Activated B cell treated with CpG ODN at 0.5 μM for 24 hours (primary cell): ENCODE measurements at regions of chr17 and their contacts with region 1.

Region 1: GRCh38 chr17:7435221-7435675 is at the start of gene TMEM102:
- DNase-seq: peak; percentile 95
- ATAC-seq: peak; percentile 87
- H3K4me3 Mint-ChIP-seq: peak within 1 kb of the TSS; percentile 94
- H3K27ac Mint-ChIP-seq: peak within 1 kb of the TSS; percentile 93
- H3K4me1 Mint-ChIP-seq: peaks cover 45% of the 10 kb centered on the region
- H3K27me3 Mint-ChIP-seq: peaks cover 15% of the 10 kb centered on the region
- CTCF ChIP-seq: no peak
- total RNA-seq, gene TMEM102: 13.4 and 14.8 TPM in 2 replicates

Region 2: GRCh38 chr17:7045909-7046724 is 389.1 kb before region 1 on chr17:
- CTCF ChIA-PET with region 1: interaction called, 5 read pairs
- POLR2A ChIA-PET with region 1: interaction called, 9 read pairs
- intact Hi-C with region 1: loop called (anchors 5 kb)
- DNase-seq: peak; percentile 30
- ATAC-seq: peak; percentile 11
- H3K4me3 Mint-ChIP-seq: peak overlapping the region; percentile 81
- H3K27ac Mint-ChIP-seq: peak overlapping the region; percentile 86
- H3K4me1 Mint-ChIP-seq: peaks cover 45% of the 10 kb centered on the region
- H3K27me3 Mint-ChIP-seq: no peaks in the 10 kb centered on the region
- CTCF ChIP-seq: no peak

Region 3: GRCh38 chr17:7064261-7064660 is 371.0 kb before region 1 on chr17:
- CTCF ChIA-PET with region 1: no interaction called
- POLR2A ChIA-PET with region 1: no interaction called
- intact Hi-C with region 1: no loop called
- DNase-seq: no peak
- ATAC-seq: no peak
- H3K4me3 Mint-ChIP-seq: no peak overlapping the region
- H3K27ac Mint-ChIP-seq: no peak overlapping the region
- H3K4me1 Mint-ChIP-seq: peaks cover 2% of the 10 kb centered on the region
- H3K27me3 Mint-ChIP-seq: peaks cover 31% of the 10 kb centered on the region
- CTCF ChIP-seq: no peak

Region 4: DNA sequence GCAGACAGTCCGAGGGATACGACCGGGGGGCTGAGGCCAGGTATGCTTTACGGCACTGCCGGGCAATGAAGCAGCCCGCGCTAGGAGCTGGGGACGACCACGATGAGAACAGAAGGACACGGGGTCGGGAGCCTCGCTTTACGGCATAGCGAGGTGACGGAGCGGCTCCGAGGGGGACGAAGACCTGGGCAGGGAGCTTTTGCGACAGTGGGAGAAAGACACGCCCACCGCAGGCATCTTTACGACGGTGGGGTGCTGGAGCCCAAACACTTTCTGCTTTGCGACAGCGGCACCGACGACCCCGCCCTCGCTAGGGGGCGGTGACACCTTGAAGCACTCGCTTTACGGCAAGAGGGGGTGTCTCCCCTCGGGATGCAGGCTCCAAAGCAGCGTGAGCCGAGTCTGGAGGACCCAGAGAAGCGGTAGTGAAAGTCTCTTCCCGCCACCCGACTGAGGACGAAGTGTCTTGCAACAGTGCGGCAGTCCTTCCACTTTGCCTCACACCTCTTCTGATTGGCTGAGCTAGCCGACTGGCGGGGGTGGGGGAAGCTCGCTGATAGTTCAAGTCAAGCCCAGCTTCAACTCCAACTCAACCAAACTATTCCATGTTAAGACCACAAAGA is 105.8 kb before region 1 on chr17:
- CTCF ChIA-PET with region 1: interaction called, 3 read pairs
- POLR2A ChIA-PET with region 1: interaction called, 9 read pairs
- intact Hi-C with region 1: loop called (anchors 1 kb)
- DNase-seq: peak; percentile 92
- ATAC-seq: peak; percentile 74
- H3K4me3 Mint-ChIP-seq: peak overlapping the region; percentile 95
- H3K27ac Mint-ChIP-seq: peak overlapping the region; percentile 96
- H3K4me1 Mint-ChIP-seq: peaks cover 41% of the 10 kb centered on the region
- H3K27me3 Mint-ChIP-seq: no peaks in the 10 kb centered on the region
- CTCF ChIP-seq: no peak

Region 5: DNA sequence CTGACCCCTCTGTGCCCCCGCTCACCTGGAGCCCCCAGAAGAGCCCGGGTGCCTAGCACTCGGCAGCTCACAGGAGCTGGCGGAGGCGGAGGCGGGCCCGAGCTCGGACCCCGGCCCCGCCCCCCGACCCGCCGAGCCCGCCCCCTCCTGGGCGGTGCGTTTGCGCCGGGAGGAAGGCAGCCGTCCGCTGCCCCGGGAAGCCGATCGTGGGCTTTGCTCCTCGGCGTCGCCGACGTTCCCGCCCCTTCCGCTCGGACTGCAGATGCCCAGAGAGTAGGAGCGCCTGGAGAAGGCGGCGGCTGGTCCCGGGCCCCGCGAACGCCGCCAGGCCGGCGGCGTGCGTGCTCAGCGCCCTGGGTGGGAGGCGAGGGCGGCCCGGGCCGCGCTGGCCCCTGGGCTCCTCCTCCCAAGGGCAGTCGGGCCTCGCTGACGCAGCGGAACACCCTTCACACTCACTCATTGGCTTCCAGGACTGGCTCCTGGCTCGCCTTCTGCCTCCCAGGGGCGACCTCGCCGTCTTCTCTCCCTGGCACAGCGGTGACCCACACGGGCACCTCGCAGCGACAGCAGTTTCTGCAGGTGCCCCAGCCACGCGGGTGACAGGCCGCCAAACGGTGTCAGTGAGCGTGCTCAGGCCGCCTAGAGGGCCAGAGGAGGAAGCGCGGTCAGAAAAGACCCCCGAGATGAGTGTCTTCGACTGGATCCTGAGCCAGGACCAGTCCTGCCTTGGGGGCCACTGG is 40.6 kb before region 1 on chr17 and contains the start of gene PLSCR3:
- CTCF ChIA-PET with region 1: interaction called, 3 read pairs
- POLR2A ChIA-PET with region 1: interaction called, 6 read pairs
- intact Hi-C with region 1: loop called (anchors 2 kb)
- DNase-seq: peak; percentile 94
- ATAC-seq: peak; percentile 88
- H3K4me3 Mint-ChIP-seq: peak within 1 kb of the TSS; percentile 91
- H3K27ac Mint-ChIP-seq: peak within 1 kb of the TSS; percentile 85
- H3K4me1 Mint-ChIP-seq: peaks cover 15% of the 10 kb centered on the region
- H3K27me3 Mint-ChIP-seq: no peaks in the 10 kb centered on the region
- CTCF ChIP-seq: no peak
- total RNA-seq, gene PLSCR3: 31.7 and 35.2 TPM in 2 replicates

Region 6: DNA sequence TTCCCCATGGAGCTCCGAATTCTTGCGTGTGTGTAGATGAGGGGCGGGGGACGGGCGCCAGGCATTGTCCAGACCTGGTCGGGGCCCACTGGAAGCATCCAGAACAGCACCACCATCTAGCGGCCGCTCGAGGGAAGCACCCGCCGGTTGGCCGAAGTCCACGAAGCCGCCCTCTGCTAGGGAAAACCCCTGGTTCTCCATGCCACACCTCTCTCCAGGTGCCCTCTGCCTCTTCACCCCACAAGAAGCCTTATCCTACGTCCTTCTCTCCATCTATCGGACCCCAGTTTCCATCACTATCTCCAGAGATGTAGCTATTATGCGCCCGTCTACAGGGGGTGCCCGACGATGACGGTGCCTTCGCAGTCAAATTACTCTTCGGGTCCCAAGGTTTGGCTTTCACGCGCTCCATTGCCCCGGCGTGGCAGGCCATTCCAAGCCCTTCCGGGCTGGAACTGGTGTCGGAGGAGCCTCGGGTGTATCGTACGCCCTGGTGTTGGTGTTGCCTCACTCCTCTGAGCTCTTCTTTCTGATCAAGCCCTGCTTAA is 125.9 kb after region 1 on chr17:
- CTCF ChIA-PET with region 1: interaction called, 25 read pairs
- POLR2A ChIA-PET with region 1: interaction called, 18 read pairs
- intact Hi-C with region 1: loop called (anchors 1 kb)
- DNase-seq: peak; percentile 76
- ATAC-seq: peak; percentile 68
- H3K4me3 Mint-ChIP-seq: peak overlapping the region; percentile 92
- H3K27ac Mint-ChIP-seq: peak overlapping the region; percentile 96
- H3K4me1 Mint-ChIP-seq: peaks cover 60% of the 10 kb centered on the region
- H3K27me3 Mint-ChIP-seq: no peaks in the 10 kb centered on the region
- CTCF ChIP-seq: no peak

Region 7: DNA sequence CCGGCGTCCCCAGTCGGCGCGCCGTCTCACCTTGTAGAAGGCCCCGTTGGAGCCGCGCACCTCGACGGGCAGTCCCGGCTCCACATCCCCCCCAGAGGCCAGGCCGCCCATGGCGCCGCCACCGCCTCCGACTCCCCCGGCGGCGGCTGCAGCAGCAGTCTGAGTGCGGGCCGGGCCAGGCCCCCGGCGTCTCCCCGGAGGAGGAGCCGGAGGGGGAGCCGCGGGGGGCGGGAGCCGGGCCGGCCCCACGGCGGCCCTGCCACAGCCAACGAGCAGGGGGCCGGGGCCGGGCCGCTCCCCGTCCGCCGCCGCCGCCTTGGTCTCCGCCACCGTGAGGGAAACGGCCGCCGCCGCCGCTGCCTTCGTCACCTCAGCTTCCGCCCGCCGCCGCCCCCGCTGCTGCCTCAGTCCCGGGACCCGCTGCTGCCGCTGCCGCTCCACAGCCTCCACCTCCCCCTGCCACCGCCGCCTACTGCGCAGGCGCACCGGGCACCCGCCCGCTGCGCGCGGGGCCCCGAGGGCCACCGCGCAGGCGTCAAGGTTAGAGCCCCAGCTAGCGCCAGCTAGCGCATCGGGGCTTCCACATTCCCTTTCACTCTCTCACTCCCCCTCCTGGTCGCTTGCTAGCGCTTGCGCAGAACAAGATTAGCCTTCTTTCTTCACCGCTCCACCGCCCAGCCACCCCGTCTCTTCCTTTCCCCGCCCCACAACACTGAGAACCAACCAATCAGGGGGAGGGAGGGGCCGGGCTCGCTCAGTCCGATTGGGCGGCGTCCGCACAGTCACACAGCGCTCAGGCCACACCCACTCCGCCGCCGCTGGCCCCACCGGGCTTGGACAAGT is 179.4 kb after region 1 on chr17 and contains the start of gene FXR2:
- CTCF ChIA-PET with region 1: interaction called, 3 read pairs
- POLR2A ChIA-PET with region 1: no interaction called
- intact Hi-C with region 1: loop called (anchors 1 kb)
- DNase-seq: peak; percentile 97
- ATAC-seq: peak; percentile 93
- H3K4me3 Mint-ChIP-seq: peak within 1 kb of the TSS; percentile 87
- H3K27ac Mint-ChIP-seq: peak within 1 kb of the TSS; percentile 93
- H3K4me1 Mint-ChIP-seq: peaks cover 37% of the 10 kb centered on the region
- H3K27me3 Mint-ChIP-seq: no peaks in the 10 kb centered on the region
- CTCF ChIP-seq: no peak
- total RNA-seq, gene FXR2: 27.5 and 32.4 TPM in 2 replicates